ENCODE measurements at regions of chr7 and their contacts with region 1.

Region 1: DNA sequence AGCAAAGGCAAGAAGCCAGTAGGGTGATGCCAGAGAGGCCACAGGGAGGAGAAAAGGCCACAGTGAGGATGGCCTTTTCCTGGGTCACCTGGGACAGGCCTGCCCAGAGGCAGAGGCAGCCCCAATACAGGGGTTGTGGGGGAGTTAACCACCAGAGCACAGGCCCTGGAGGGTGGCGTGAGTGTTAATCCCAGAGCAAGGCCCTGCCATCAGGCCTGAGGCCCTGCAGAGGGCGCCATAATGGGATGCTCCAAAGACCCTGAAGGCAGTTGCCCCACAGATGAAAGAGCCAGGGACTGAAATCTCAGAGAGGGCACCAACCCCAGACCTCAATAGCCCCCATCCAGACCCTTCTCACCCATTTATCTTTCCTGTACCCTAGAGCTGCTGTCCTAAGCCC is 23.9 kb downstream of the SLC13A4 start:
- DNase-seq: peak; percentile 69

Region 2: GRCh38 chr7:135616136-135616535 is 87.9 kb before region 1 on chr7:
- CTCF ChIA-PET with region 1: no interaction called
- POLR2A ChIA-PET with region 1: no interaction called
- DNase-seq: no peak

Region 3: GRCh38 chr7:135716677-135717238 is 12.7 kb after region 1 on chr7:
- CTCF ChIA-PET with region 1: interaction called, 13 read pairs
- POLR2A ChIA-PET with region 1: no interaction called
- DNase-seq: peak; percentile 65

Region 4: DNA sequence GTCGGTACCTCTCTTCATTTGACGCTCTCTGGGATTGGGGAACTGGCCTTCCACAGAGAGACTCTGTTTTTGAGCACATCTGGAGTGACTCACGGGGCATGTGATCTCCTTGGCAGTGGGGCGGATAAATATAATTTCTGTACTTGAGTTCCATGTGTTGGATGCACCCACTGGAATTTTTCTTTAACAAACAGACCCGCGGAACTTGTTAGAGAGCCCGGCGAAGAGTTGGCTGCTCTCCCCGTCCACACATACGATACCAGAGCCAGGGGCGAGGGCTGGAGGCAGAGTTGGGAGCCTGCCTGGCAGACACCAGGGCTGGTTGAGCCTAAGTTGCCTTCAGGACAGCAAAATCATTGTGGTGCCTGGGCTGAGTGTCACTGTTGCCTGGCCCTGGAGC is 44.7 kb after region 1 on chr7 and contains the start of gene FAM180A:
- CTCF ChIA-PET with region 1: no interaction called
- POLR2A ChIA-PET with region 1: no interaction called
- DNase-seq: no peak